PC-9 (cell line): ENCODE measurements at regions of chr1 and their contacts with region 1.

Region 1: GRCh38 chr1:204685236-204686006 is at the start of gene LRRN2:
- DNase-seq: peak in 1 of 2 experiments; percentile 44
- H3K4me3 ChIP-seq: peak within 1 kb of the TSS; percentile 46; the same call in 1 of the 2 replicates
- H3K27ac ChIP-seq: no peak within 1 kb of the TSS
- H3K4me1 ChIP-seq: no peaks in the 10 kb centered on the region
- H3K27me3 ChIP-seq: peaks cover 42% of the 10 kb centered on the region
- CTCF ChIP-seq: no peak
- total RNA-seq, gene LRRN2: 4.6 and 7.0 TPM in 2 replicates

Region 2: DNA sequence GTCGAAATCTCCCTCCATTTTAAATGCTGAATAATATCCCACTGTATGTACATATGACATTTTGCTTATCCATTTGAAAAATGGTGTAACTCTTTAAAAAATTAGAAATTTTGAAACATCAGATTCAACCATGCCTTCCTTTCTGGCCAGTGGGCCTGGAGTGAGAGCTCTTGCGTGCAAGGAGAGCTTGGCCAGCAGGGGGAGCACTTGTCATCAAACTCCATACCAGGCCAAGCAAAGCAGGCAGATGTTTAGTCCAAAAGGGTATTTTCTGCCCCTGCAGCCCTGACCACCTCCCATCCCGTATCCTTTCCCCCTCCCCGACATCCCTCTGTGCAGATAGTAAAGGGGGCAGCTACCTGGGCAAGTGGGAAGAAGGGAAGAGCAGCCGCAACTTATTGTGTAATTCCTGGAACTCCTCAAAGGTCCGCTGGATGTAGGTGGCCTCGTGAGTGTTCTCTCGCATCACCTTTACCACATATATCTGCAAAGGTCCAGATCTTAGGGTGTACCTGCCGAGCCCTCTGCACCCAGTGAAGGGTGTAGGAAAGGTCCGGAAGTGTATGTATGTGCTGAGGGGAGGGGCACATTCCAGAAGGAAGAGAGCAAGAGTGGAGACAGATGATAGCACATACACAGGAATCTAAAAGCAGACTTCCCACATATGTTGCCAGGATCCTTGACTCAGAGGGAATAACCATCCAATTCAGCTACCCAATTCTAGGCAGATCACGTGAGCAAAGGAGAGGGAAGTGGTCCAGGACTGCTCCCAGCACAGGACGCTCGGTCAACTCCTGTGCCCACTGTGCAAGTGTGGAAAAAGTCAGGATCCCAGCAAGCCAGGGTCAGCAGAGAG is 253.9 kb before region 1 on chr1:
- CTCF ChIA-PET with region 1: interaction called, 10 read pairs
- POLR2A ChIA-PET with region 1: no interaction called
- intact Hi-C with region 1: no loop called
- DNase-seq: peak; percentile 58 to 73
- H3K4me3 ChIP-seq: no peak overlapping the region
- H3K27ac ChIP-seq: peak overlapping the region; percentile 35; the same call in 1 of the 2 replicates
- H3K4me1 ChIP-seq: peaks cover 45% of the 10 kb centered on the region
- H3K27me3 ChIP-seq: no peaks in the 10 kb centered on the region
- CTCF ChIP-seq: peak; percentile 95

Region 3: DNA sequence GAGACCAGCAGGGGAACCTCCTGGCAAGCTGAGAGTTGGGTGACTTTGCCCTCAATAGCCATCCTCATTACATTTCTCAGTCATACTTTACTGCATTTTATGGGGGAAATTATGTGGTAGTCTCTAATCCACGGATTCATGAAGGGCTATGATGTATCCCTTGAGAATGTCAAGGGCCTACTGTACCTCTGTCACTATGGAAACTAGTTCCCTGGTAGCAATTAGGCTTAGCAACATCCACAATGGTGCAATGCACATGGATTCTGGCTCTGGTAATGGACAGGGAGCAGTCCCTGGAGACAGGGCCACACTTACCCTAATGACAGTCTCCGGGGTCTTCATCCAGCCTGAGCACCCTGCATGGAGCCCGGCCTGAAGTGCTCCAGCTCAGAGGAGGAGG is 26.4 kb before region 1 on chr1:
- CTCF ChIA-PET with region 1: no interaction called
- POLR2A ChIA-PET with region 1: interaction called, 10 read pairs
- intact Hi-C with region 1: no loop called
- DNase-seq: no peak
- H3K4me3 ChIP-seq: no peak overlapping the region
- H3K27ac ChIP-seq: no peak overlapping the region
- H3K4me1 ChIP-seq: no peaks in the 10 kb centered on the region
- H3K27me3 ChIP-seq: peaks cover 13% of the 10 kb centered on the region; the same call in 1 of the 2 replicates
- CTCF ChIP-seq: no peak

Region 4: DNA sequence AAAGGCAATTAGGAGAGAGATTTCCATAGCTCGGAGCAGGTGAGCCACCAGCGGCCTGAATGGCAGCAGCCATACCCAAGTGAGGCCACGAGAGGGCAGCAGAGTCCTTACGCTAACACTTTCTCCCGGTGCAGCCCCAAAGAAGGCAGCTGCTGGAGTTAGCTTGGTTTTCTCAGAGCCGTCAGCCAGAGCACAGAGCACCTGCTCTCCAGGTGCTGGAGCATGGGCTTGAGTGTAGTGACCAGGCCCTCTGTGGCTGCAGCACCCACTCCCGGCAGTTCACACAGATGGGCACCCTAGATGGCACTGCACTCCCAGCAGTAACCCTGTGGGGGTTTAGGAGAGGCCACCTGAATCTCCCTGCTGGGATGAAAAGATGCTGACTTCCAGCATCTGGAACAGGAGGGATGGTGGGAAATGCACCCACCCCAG is 588.1 kb after region 1 on chr1:
- CTCF ChIA-PET with region 1: no interaction called
- POLR2A ChIA-PET with region 1: no interaction called
- intact Hi-C with region 1: no loop called
- DNase-seq: peak; percentile 67 to 83
- H3K4me3 ChIP-seq: no peak overlapping the region
- H3K27ac ChIP-seq: no peak overlapping the region
- H3K4me1 ChIP-seq: peaks cover 5% of the 10 kb centered on the region
- H3K27me3 ChIP-seq: no peaks in the 10 kb centered on the region
- CTCF ChIP-seq: peak; percentile 97